CD4-positive, alpha-beta memory T cell (primary cell): ENCODE measurements at regions of chr6 and their contacts with region 1.

Region 1: GRCh38 chr6:4155848-4156466 is 20.6 kb upstream of the ECI2 start:
- DNase-seq: peak; percentile 69 to 81 (median 73)
- H3K4me3 ChIP-seq: no peak overlapping the region
- H3K4me3 Mint-ChIP-seq: no peak overlapping the region
- H3K27ac ChIP-seq: no peak overlapping the region
- H3K27ac Mint-ChIP-seq: peak overlapping the region in 1 of 7 donors; percentile 25
- H3K4me1 ChIP-seq: no peaks in the 10 kb centered on the region
- H3K4me1 Mint-ChIP-seq: peaks cover 0 to 5% (median 2%) of the 10 kb centered on the region in 4 donors
- H3K27me3 ChIP-seq: no peaks in the 10 kb centered on the region
- H3K27me3 Mint-ChIP-seq: peaks cover 2 to 4% of the 10 kb centered on the region in 2 donors

Region 2: DNA sequence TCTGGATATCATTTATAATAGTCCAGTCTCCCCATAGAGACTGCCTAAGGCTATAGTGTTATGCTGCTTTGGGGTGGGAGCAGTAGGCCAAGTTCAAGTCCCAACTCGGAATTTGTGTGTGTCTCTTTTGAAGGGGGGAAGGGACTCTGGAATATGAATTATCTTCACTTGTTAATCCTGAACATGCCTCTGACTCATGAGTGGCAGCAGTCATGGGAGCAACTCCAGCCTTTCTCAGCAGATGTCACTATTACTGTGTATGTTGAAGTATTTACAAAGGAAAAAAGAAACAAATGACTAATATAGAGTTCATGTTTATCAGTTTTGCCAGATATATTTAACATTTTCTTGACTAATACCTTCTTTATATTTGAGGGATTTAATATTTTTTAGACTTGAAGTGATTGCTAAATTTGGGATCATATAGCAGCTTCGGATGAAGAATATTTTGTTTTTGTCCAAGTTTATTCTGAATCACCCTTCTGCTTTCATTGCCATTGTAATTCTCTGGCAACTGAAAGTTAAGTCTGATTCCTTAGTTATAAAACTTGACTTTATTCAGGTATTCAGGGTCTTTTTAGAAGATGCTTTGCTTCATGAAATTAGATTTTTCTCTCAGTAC is 100.4 kb before region 1 on chr6:
- CTCF ChIA-PET with region 1: interaction called, 31 read pairs
- POLR2A ChIA-PET with region 1: no interaction called
- intact Hi-C with region 1: loop called (anchors 2 kb)
- DNase-seq: peak in 1 of 5 donors; percentile 2
- H3K4me3 ChIP-seq: no peak overlapping the region
- H3K4me3 Mint-ChIP-seq: no peak overlapping the region
- H3K27ac ChIP-seq: no peak overlapping the region
- H3K27ac Mint-ChIP-seq: peak overlapping the region in 4 of 7 donors; percentile 34 to 70 (median 60)
- H3K4me1 ChIP-seq: no peaks in the 10 kb centered on the region
- H3K4me1 Mint-ChIP-seq: peaks cover 8 to 15% (median 11%) of the 10 kb centered on the region in 4 donors
- H3K27me3 ChIP-seq: no peaks in the 10 kb centered on the region
- H3K27me3 Mint-ChIP-seq: no peaks in the 10 kb centered on the region

Region 3: DNA sequence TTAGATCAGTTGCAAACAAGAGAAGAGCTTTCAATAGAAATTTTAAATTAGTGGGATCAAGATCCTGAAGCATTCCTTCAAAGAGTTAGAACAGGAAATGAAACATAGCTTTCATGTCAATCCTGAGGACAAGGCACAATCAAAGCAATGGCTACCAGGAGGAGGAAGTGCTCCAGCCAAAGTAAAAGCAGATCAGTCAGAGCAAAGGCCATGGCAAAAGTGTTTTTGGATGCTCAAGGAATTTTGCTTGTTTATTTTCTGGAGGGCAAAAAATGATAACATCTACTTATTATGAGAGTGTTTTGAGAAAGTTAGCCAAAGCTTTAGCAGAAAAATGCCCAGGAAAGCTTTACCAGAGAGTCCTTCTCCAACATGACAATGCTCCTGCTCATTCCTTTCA is 40.4 kb after region 1 on chr6:
- CTCF ChIA-PET with region 1: no interaction called
- POLR2A ChIA-PET with region 1: no interaction called
- intact Hi-C with region 1: no loop called
- DNase-seq: no peak
- H3K4me3 ChIP-seq: no peak overlapping the region
- H3K4me3 Mint-ChIP-seq: no peak overlapping the region
- H3K27ac ChIP-seq: no peak overlapping the region
- H3K27ac Mint-ChIP-seq: no peak overlapping the region
- H3K4me1 ChIP-seq: no peaks in the 10 kb centered on the region
- H3K4me1 Mint-ChIP-seq: no peaks in the 10 kb centered on the region
- H3K27me3 ChIP-seq: no peaks in the 10 kb centered on the region
- H3K27me3 Mint-ChIP-seq: peaks cover 0 to 4% of the 10 kb centered on the region in 2 donors

Region 4: GRCh38 chr6:4460586-4461475 is 304.9 kb after region 1 on chr6:
- CTCF ChIA-PET with region 1: no interaction called
- POLR2A ChIA-PET with region 1: no interaction called
- intact Hi-C with region 1: no loop called
- DNase-seq: no peak
- H3K4me3 ChIP-seq: no peak overlapping the region
- H3K4me3 Mint-ChIP-seq: no peak overlapping the region
- H3K27ac ChIP-seq: no peak overlapping the region
- H3K27ac Mint-ChIP-seq: no peak overlapping the region
- H3K4me1 ChIP-seq: no peaks in the 10 kb centered on the region
- H3K4me1 Mint-ChIP-seq: no peaks in the 10 kb centered on the region
- H3K27me3 ChIP-seq: no peaks in the 10 kb centered on the region
- H3K27me3 Mint-ChIP-seq: peaks cover 0 to 4% of the 10 kb centered on the region in 2 donors

Region 5: DNA sequence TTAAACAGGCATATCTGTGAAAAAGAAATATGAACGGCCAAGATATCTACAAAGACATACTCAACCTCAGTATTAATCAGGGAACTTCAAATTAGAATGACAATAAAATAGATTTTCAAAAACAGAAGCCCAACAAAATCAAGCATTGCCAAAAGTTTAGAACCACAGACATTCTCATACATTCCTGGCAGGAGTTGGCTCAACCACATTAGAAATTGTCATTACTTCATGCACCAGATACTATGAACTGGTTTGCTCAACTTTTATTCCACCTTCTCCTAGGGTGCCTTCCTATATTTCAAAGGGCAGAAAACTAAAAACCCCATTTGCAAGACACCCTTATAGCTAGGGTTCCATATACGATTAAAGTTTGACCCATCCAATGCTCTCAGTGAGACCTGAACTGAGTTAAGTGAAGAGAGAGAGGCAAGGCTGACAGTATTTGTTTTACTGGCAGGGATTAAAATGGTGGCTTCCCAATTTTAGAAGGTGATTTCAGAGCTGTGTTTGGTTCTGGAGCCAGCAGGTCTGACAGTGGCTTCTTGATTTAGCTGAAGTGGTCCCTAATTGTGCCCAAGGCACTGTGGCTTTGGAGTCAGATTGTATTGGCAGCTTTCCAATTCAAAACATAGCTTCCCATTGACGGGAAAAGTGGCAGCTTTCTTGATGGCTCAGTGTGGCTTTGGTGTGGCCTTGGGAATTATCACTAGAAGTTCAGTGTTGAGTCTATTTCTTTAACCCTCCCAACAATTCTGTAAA is 543.1 kb after region 1 on chr6:
- CTCF ChIA-PET with region 1: no interaction called
- POLR2A ChIA-PET with region 1: no interaction called
- intact Hi-C with region 1: no loop called
- DNase-seq: no peak
- H3K4me3 ChIP-seq: no peak overlapping the region
- H3K4me3 Mint-ChIP-seq: no peak overlapping the region
- H3K27ac ChIP-seq: no peak overlapping the region
- H3K27ac Mint-ChIP-seq: no peak overlapping the region
- H3K4me1 ChIP-seq: no peaks in the 10 kb centered on the region
- H3K4me1 Mint-ChIP-seq: no peaks in the 10 kb centered on the region
- H3K27me3 ChIP-seq: no peaks in the 10 kb centered on the region
- H3K27me3 Mint-ChIP-seq: peaks cover 5 to 15% of the 10 kb centered on the region in 2 donors